ENCODE measurements at regions of chr6 and their contacts with region 1.

Region 1: GRCh38 chr6:99746261-99746895 is 139.7 kb downstream of the PRDM13 start:
- DNase-seq: peak in 4 of 10 donors; percentile 46 to 52 (median 50)

Region 2: GRCh38 chr6:99324996-99325395 is 421.4 kb before region 1 on chr6:
- intact Hi-C with region 1: loop called (anchors 10 kb)
- DNase-seq: no peak

Region 3: DNA sequence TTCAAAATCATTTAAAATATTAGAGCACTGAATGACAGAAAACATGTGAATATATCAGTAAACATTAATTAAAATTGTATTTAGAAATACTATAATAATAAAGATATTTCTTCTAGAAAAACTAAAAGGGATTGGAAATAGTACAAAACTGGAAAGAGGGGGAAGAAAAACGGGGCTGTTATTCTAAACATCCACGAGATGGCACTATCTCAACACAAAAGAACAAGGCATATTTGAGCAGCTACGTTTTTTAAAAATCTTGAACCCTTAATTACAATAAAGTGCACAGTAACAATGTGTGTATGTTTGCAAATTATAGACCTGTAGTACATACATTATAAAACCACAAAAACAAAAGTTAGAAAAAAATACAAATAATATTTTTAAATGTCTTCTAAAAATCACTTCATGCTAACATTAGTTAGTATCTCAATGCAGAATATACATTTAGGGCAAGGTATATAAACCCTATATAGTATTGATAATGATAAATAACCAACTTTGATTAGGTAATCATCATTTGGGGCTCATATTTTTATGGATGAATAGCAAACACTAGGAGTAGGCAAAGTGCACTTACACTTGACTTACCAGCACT is 278.8 kb before region 1 on chr6:
- intact Hi-C with region 1: loop called (anchors 1 kb)
- DNase-seq: no peak

Region 4: DNA sequence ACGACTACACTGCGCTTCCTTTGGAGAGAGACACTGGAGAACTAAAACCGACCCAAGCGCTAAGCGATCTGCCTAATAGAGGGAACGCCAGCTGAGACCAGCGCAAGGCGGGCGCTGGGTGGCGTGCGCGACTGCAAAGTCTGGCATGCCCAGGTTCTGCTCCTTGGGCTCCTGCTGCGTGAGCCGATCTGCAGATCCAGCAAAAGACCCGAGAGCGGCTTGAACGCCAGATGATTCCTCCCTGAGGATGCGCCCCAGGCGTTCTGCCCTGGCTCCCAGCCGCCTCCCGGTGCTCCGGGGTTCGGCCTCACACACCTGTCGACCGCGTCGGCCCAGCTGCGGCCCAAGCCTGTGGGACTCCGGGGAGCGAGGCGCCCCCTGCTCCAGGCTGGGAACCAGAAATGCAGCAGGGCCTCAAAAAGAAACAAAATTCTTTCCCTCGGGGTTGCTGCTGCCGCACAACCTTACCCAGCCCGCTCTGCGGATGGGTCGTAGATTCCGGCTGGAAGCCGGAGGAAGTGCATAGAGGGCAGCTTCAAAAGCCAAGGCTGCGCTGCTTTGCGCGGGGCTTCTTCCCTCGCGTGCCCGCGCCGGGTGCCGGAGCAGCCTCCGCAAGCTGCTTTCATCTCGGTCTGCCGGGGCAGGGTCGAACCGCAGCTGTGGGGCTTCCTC is 157.6 kb before region 1 on chr6:
- intact Hi-C with region 1: loop called (anchors 10 kb)
- DNase-seq: peak in 8 of 10 donors; percentile 36 to 89 (median 52)

Region 5: GRCh38 chr6:99822741-99823512 is 76.5 kb after region 1 on chr6:
- intact Hi-C with region 1: no loop called
- DNase-seq: no peak

Measured in posterior cingulate gyrus (tissue), 11 donors.